ENCODE measurements at regions of chr11 and their contacts with region 1.

Region 1: DNA sequence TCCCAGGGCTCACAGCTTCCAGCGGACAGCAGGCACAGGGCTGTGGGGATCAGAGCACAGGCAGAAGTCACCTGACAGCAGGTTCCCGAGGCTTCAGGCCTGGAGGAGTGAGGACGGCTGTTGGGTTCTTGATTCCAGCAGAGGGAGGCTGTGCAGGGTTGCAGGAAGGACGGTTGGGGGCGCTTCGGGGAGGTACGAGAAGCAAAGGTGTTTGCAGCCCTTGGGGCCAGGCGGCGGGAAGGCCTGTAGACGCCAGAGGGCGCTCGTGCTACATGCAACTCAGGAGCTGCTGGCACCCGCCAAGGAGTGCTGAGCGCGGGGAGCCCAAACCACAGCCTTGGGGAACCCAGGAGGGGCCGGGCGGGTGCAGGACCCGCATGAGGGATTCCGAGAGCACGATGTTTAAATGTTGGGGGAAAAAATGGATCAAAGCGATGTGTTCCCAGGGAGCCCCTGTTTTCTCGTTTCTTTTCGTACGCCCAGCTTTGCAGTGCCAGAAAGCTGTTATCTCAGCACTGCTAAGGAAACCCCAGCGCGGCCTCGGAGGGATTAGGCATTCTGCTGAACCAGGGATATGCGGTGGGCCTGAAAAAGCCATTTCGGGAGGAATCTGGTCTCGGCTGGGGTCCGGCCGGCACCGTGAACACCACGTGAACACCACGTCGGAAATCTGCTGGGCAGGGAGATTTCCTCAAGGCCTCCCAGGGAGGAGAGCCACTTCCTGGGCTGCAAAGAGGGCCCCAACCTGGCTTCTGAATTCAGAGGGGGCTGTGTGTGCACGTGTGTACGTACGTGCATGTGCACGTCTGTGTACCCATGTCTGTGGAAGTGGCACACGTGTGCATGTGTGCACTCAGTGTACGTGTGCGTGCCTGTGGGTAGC is 88.1 kb downstream of the KCNQ1 start:
- DNase-seq: peak; percentile 97
- ATAC-seq: peak; percentile 84
- H3K4me3 Mint-ChIP-seq: peak overlapping the region; percentile 55
- H3K27ac Mint-ChIP-seq: no peak overlapping the region
- H3K4me1 Mint-ChIP-seq: peaks cover 19% of the 10 kb centered on the region
- H3K27me3 Mint-ChIP-seq: no peaks in the 10 kb centered on the region
- CTCF ChIP-seq: peak; percentile 96

Region 2: GRCh38 chr11:2222451-2222850 is 310.5 kb before region 1 on chr11:
- CTCF ChIA-PET with region 1: no interaction called
- POLR2A ChIA-PET with region 1: no interaction called
- intact Hi-C with region 1: no loop called
- DNase-seq: no peak
- ATAC-seq: no peak
- H3K4me3 Mint-ChIP-seq: no peak overlapping the region
- H3K27ac Mint-ChIP-seq: no peak overlapping the region
- H3K4me1 Mint-ChIP-seq: no peaks in the 10 kb centered on the region
- H3K27me3 Mint-ChIP-seq: peaks cover 4% of the 10 kb centered on the region
- CTCF ChIP-seq: no peak

Region 3: DNA sequence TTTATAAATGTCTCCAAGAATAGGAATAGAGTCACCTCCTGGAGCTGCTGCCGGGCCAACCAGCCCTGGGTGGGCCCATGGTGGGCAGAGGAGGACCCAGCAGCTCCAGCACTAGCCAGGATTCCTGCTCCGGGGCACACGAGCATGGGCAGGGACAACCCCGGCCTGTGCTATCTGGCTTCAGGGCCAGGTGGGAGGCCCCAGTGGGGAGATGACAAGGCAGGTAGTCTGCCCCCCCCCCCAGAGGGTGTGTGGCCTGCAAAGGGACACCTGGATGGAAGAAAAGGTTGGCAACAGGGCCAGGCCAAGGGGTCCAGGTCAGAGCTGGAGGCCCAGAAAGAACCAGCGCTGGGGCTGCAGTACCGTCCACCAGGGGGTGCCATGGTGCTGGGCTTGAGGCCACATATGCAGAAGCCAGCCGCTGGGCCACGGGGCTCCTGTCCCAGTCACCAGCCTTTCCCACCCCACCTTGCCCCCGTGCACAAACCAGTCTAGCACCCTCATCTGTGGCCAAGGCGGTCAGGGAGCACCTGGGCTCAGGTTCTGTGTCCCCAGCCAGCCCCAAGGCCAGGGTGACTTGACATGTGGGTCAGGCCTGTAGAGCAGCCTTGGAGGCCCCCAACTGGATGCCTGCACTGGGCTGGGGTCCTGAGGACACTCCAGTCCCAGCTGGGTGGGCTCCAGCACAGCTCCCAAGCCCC is 227.7 kb before region 1 on chr11:
- CTCF ChIA-PET with region 1: interaction called, 36 read pairs
- POLR2A ChIA-PET with region 1: interaction called, 4 read pairs
- intact Hi-C with region 1: no loop called
- DNase-seq: peak; percentile 94
- ATAC-seq: peak; percentile 43
- H3K4me3 Mint-ChIP-seq: peak overlapping the region; percentile 53
- H3K27ac Mint-ChIP-seq: peak overlapping the region; percentile 91
- H3K4me1 Mint-ChIP-seq: peaks cover 65% of the 10 kb centered on the region
- H3K27me3 Mint-ChIP-seq: no peaks in the 10 kb centered on the region
- CTCF ChIP-seq: peak; percentile 80

Region 4: DNA sequence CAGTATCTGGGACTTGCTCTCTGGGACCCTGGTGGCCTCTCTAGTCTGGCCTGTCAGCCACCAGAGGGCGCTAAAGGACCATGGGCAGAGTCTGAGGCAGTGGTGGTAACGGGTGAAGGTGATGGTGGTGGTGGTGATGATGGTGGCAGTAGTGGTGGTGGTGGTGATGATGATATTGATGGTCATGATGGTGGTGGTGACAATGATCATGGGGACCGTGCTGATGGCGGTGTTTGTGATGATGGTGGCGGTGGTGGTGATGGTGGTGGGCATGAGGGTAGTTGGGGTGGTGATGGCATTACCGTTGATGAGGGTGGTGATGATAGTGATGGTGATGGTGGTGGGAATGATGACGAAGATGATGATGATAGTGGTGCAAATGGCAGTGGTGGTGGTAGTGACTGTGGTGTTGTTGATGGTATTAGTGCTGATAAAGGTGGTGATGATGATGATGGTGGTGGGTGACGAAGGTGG is 104.6 kb before region 1 on chr11:
- CTCF ChIA-PET with region 1: interaction called, 182 read pairs
- POLR2A ChIA-PET with region 1: interaction called, 4 read pairs
- intact Hi-C with region 1: loop called (anchors 1 kb)
- DNase-seq: peak; percentile 82
- ATAC-seq: peak; percentile 87
- H3K4me3 Mint-ChIP-seq: no peak overlapping the region
- H3K27ac Mint-ChIP-seq: no peak overlapping the region
- H3K4me1 Mint-ChIP-seq: no peaks in the 10 kb centered on the region
- H3K27me3 Mint-ChIP-seq: no peaks in the 10 kb centered on the region
- CTCF ChIP-seq: peak; percentile 75

Region 5: GRCh38 chr11:2549876-2550620 is 17.1 kb after region 1 on chr11:
- CTCF ChIA-PET with region 1: interaction called, 12 read pairs
- POLR2A ChIA-PET with region 1: no interaction called
- intact Hi-C with region 1: no loop called
- DNase-seq: no peak
- ATAC-seq: no peak
- H3K4me3 Mint-ChIP-seq: no peak overlapping the region
- H3K27ac Mint-ChIP-seq: no peak overlapping the region
- H3K4me1 Mint-ChIP-seq: peaks cover 9% of the 10 kb centered on the region
- H3K27me3 Mint-ChIP-seq: no peaks in the 10 kb centered on the region
- CTCF ChIP-seq: no peak

Region 6: GRCh38 chr11:2586087-2586792 is 53.3 kb after region 1 on chr11:
- CTCF ChIA-PET with region 1: no interaction called
- POLR2A ChIA-PET with region 1: no interaction called
- intact Hi-C with region 1: no loop called
- DNase-seq: no peak
- ATAC-seq: no peak
- H3K4me3 Mint-ChIP-seq: no peak overlapping the region
- H3K27ac Mint-ChIP-seq: no peak overlapping the region
- H3K4me1 Mint-ChIP-seq: no peaks in the 10 kb centered on the region
- H3K27me3 Mint-ChIP-seq: no peaks in the 10 kb centered on the region
- CTCF ChIP-seq: no peak

Region 7: GRCh38 chr11:2892215-2893020 is 359.5 kb after region 1 on chr11:
- CTCF ChIA-PET with region 1: interaction called, 412 read pairs
- POLR2A ChIA-PET with region 1: interaction called, 26 read pairs
- intact Hi-C with region 1: loop called (anchors 1 kb)
- DNase-seq: peak; percentile 84
- ATAC-seq: peak; percentile 66
- H3K4me3 Mint-ChIP-seq: peak overlapping the region; percentile 83
- H3K27ac Mint-ChIP-seq: peak overlapping the region; percentile 91
- H3K4me1 Mint-ChIP-seq: peaks cover 17% of the 10 kb centered on the region
- H3K27me3 Mint-ChIP-seq: no peaks in the 10 kb centered on the region
- CTCF ChIP-seq: peak; percentile 96

Region 8: GRCh38 chr11:2951231-2952110 is 418.5 kb after region 1 on chr11:
- CTCF ChIA-PET with region 1: interaction called, 12 read pairs
- POLR2A ChIA-PET with region 1: no interaction called
- intact Hi-C with region 1: no loop called
- DNase-seq: no peak
- ATAC-seq: no peak
- H3K4me3 Mint-ChIP-seq: no peak overlapping the region
- H3K27ac Mint-ChIP-seq: peak overlapping the region; percentile 67
- H3K4me1 Mint-ChIP-seq: peaks cover 54% of the 10 kb centered on the region
- H3K27me3 Mint-ChIP-seq: no peaks in the 10 kb centered on the region
- CTCF ChIP-seq: no peak